ENCODE measurements at regions of chr11 and their contacts with region 1.

Region 1: GRCh38 chr11:66051766-66052663 is at the start of gene SF3B2:
- DNase-seq: peak; percentile 96 to 97
- ATAC-seq: peak; percentile 94 to 95
- H3K4me3 ChIP-seq: peak within 1 kb of the TSS; percentile 95 to 100 (median 98)
- H3K27ac ChIP-seq: peak within 1 kb of the TSS; percentile 83 to 94 (median 90)
- H3K4me1 ChIP-seq: peaks cover 13 to 19% of the 10 kb centered on the region in 2 donors
- H3K27me3 ChIP-seq: peaks cover 0 to 3% (median 0%) of the 10 kb centered on the region in 3 donors
- CTCF ChIP-seq: no peak
- POLR2A ChIP-seq: peak; percentile 39 to 69
- total RNA-seq, gene SF3B2: 92.9 to 186 (median 124) TPM

Region 2: DNA sequence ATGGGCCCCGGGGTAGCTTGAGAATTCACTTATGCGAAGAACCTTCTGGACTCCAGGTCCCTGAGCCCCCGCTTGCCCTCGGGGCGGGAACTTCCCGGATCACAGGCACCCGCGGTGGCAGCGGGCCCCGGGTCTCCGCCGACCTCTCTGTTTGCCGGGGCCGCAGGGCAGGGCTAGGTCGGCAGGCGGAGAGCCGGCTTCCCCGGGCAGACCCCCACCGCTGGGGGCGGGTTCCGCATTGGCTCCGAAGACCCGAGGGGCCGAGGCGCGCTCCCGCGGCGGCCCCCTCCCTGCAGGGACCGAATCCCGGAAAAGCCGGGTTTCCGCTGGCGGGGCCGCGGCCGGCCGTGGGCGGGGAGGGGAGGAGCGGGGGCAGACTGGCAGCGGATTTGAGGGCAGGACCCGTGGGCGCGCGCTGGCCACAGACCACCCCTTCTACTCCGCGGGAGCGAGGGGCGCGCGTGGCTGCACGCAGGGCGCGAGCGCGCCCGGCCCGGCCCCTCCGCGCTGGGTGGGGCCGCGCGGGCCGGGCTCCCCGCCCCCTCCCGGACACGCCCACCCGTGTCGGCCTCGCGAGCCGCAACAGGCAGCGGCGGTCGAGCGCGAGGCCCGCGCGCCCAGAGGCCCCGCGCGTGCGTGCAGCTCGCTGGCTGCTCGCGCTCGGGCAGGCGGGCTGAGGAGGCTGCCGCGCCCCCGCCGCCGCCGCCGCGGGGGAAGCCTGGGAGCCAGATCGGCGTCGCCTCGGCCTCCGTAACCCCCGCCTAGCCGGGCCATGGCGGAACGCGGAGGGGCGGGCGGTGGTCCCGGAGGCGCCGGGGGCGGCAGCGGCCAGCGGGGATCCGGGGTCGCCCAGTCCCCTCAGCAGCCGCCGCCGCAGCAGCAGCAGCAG is 17.9 kb after region 1 on chr11 and contains the start of gene PACS1:
- in situ Hi-C with region 1: no loop called
- intact Hi-C with region 1: loop called (anchors 2 kb)
- DNase-seq: peak; percentile 25 to 53
- ATAC-seq: peak; percentile 60 to 66
- H3K4me3 ChIP-seq: peak within 1 kb of the TSS; percentile 67 to 93 (median 80)
- H3K27ac ChIP-seq: peak within 1 kb of the TSS; percentile 83 to 91 (median 86)
- H3K4me1 ChIP-seq: peaks cover 21 to 26% of the 10 kb centered on the region in 2 donors
- H3K27me3 ChIP-seq: no peaks in the 10 kb centered on the region
- CTCF ChIP-seq: peak in 3 of 5 experiments; percentile 9 to 34 (median 23)
- POLR2A ChIP-seq: peak; percentile 51 to 66
- total RNA-seq, gene PACS1: 6.6 to 20.4 (median 16.9) TPM

Region 3: DNA sequence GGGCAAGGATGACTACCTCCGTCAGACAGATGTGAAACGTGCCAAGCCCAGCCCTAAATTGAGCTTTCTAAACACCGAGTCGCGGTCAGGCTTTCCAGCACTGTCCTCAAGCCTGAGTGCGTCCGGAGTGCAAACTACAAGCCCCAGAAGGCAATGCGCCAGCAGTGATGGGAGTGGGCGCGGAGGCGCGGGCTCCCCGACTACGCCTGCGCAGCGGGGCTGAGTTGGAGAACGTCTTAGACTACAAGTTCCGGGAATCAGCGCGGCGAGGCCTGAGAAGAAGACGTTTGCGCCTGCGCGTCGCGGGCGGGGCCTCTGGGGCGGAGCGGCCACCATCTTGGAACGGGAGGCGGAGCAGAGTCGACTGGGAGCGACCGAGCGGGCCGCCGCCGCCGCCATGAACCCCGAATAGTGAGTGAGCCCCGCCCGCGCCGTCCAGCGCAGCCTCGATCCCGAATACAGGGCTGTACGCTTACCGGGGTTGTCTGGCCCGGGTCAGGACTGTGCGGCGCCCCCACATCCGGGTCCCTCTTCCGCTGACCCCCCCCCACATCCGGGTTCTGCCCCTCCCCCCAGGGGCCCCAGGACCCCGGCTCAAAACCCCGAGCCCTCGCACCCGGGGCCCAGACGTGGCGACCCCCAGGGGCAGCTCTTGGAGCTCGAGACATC is 216.4 kb after region 1 on chr11 and contains the start of gene RAB1B:
- in situ Hi-C with region 1: no loop called
- intact Hi-C with region 1: loop called (anchors 5 kb)
- DNase-seq: peak; percentile 100
- ATAC-seq: peak; percentile 84
- H3K4me3 ChIP-seq: peak within 1 kb of the TSS; percentile 79 to 99 (median 86)
- H3K27ac ChIP-seq: peak within 1 kb of the TSS; percentile 92 to 99 (median 96)
- H3K4me1 ChIP-seq: peaks cover 19 to 27% of the 10 kb centered on the region in 2 donors
- H3K27me3 ChIP-seq: no peaks in the 10 kb centered on the region
- CTCF ChIP-seq: no peak
- POLR2A ChIP-seq: peak in 1 of 2 donors; percentile 67
- total RNA-seq, gene RAB1B: 96.0 to 194 (median 130) TPM

Region 4: GRCh38 chr11:67428052-67428914 is 1376.3 kb after region 1 on chr11 and contains the start of gene RPS6KB2:
- in situ Hi-C with region 1: no loop called
- intact Hi-C with region 1: loop called (anchors 10 kb)
- DNase-seq: peak; percentile 96 to 99
- ATAC-seq: peak; percentile 96 to 99
- H3K4me3 ChIP-seq: peak within 1 kb of the TSS; percentile 92 to 100 (median 95)
- H3K27ac ChIP-seq: peak within 1 kb of the TSS; percentile 94 to 98 (median 96)
- H3K4me1 ChIP-seq: peaks cover 16 to 32% of the 10 kb centered on the region in 2 donors
- H3K27me3 ChIP-seq: no peaks in the 10 kb centered on the region
- CTCF ChIP-seq: no peak
- POLR2A ChIP-seq: peak; percentile 95 to 98
- total RNA-seq, gene RPS6KB2: 38.0 to 74.1 (median 39.4) TPM